ENCODE measurements at regions of chr17 and their contacts with region 1.

Region 1: DNA sequence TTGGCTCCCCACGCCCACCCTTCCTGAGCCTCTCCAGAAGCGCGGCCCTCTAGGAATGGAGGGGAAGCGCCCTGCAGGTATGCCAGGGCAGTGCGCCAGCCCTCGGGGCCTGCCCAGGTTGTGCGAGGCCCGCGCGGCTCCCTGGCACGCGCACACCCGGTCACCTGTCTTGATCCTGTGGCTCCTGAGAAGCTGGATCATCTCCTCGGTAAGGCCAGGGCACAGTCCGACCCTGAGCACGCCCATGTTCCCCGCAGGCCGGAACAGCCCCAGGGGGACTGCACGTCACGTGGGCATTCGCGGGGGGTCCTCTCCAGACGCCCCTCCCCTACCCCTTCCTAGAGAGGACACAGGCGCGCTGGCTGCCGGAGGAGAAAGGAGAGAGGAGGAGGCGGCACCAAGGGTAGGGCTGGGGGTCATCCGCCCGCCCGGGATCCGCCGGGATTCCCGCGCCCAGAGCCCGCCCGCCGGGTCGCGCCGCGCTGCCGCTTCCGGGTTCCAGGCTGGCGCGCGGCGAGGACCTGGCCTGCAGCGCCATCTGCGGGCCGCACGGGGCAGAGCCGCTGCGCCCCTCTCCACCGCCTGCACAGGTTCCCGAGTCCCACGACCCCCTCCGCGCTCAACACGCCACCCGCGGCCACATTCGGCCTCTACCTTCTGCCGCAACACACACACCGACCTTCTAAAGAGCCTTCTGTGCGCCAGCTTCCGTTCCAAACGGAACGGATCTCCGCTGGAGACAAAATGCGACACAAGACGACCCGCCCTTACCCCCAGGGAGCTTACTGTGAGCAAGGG is at the start of gene RAD51D:
- DNase-seq: peak; percentile 72 to 86 (median 81)
- H3K4me3 ChIP-seq: peak within 1 kb of the TSS; percentile 67 to 98
- H3K4me3 Mint-ChIP-seq: peak within 1 kb of the TSS; percentile 90 to 98 (median 94)
- H3K27ac ChIP-seq: peak within 1 kb of the TSS; percentile 80
- H3K27ac Mint-ChIP-seq: peak within 1 kb of the TSS; percentile 85 to 98 (median 94)
- H3K4me1 ChIP-seq: peaks cover 24% of the 10 kb centered on the region
- H3K4me1 Mint-ChIP-seq: peaks cover 24 to 45% (median 32%) of the 10 kb centered on the region in 4 donors
- H3K27me3 ChIP-seq: no peaks in the 10 kb centered on the region
- H3K27me3 Mint-ChIP-seq: peaks cover 0 to 1% of the 10 kb centered on the region in 2 donors
- total RNA-seq, gene RAD51D: 21.5 to 29.2 TPM

Region 2: GRCh38 chr17:34420254-34420766 is 699.3 kb before region 1 on chr17:
- CTCF ChIA-PET with region 1: interaction called, 53 read pairs
- POLR2A ChIA-PET with region 1: interaction called, 4 read pairs
- intact Hi-C with region 1: loop called (anchors 1 kb)
- DNase-seq: peak in 4 of 5 donors; percentile 47 to 59 (median 52)
- H3K4me3 ChIP-seq: no peak overlapping the region
- H3K4me3 Mint-ChIP-seq: no peak overlapping the region
- H3K27ac ChIP-seq: no peak overlapping the region
- H3K27ac Mint-ChIP-seq: no peak overlapping the region
- H3K4me1 ChIP-seq: no peaks in the 10 kb centered on the region
- H3K4me1 Mint-ChIP-seq: peaks cover 0 to 9% (median 3%) of the 10 kb centered on the region in 4 donors
- H3K27me3 ChIP-seq: no peaks in the 10 kb centered on the region
- H3K27me3 Mint-ChIP-seq: peaks cover 19 to 45% of the 10 kb centered on the region in 2 donors

Region 3: GRCh38 chr17:34637548-34638525 is 481.7 kb before region 1 on chr17:
- CTCF ChIA-PET with region 1: no interaction called
- POLR2A ChIA-PET with region 1: interaction called, 5 read pairs
- intact Hi-C with region 1: loop called (anchors 1 kb)
- DNase-seq: peak; percentile 74 to 78 (median 77)
- H3K4me3 ChIP-seq: peak overlapping the region in 1 of 2 donors; percentile 59
- H3K4me3 Mint-ChIP-seq: peak overlapping the region; percentile 79 to 87 (median 84)
- H3K27ac ChIP-seq: no peak overlapping the region
- H3K27ac Mint-ChIP-seq: peak overlapping the region in 3 of 7 donors; percentile 23 to 80 (median 46)
- H3K4me1 ChIP-seq: peaks cover 14% of the 10 kb centered on the region
- H3K4me1 Mint-ChIP-seq: peaks cover 4 to 6% (median 4%) of the 10 kb centered on the region in 4 donors
- H3K27me3 ChIP-seq: peaks cover 5% of the 10 kb centered on the region
- H3K27me3 Mint-ChIP-seq: peaks cover 10 to 23% of the 10 kb centered on the region in 2 donors

Region 4: GRCh38 chr17:34902831-34903547 is 216.6 kb before region 1 on chr17:
- CTCF ChIA-PET with region 1: no interaction called
- POLR2A ChIA-PET with region 1: no interaction called
- intact Hi-C with region 1: no loop called
- DNase-seq: no peak
- H3K4me3 ChIP-seq: no peak overlapping the region
- H3K4me3 Mint-ChIP-seq: no peak overlapping the region
- H3K27ac ChIP-seq: no peak overlapping the region
- H3K27ac Mint-ChIP-seq: no peak overlapping the region
- H3K4me1 ChIP-seq: no peaks in the 10 kb centered on the region
- H3K4me1 Mint-ChIP-seq: no peaks in the 10 kb centered on the region
- H3K27me3 ChIP-seq: no peaks in the 10 kb centered on the region
- H3K27me3 Mint-ChIP-seq: peaks cover 22 to 27% of the 10 kb centered on the region in 2 donors

Region 5: DNA sequence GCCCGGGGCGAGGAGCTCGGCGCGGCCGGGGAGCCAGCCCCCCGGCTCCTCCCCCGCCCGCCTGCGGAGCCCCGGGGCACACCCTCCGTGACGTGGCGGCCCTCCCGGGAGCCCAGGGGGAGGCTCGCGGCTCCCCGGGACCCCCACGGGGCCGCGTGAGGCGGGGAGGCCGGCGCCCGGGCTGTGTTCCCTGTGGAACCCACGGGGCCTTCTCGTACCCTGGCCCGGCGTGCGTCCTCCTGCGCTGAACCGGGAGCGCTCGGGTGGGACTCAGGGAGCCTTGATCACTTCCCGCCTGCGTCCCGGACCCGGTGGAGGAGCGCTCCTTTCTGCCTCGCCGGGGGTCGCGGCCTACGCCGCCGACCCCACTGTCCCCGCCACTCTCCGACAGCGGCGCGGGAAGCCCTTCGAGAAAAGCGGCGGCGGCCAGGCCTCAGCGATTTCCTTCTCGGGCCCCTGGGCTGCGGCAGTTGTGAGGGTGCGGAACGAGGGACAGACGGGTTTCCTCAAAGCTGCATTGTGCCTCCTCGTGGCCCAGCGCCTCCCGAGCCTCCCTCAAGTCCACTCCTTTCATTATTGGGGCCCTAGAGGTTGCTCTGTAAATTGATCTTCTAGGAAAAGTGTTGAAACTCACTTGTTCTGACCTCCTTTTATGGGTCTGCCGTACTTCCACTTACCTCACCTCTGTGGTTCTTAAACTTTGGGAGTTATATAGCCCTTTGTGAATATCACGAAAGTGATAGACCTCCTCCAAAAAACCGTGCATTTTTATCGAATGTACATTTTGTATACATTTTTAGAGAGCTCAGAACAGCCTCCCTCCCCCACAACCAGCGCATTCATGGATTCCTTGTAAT is 138.7 kb before region 1 on chr17:
- CTCF ChIA-PET with region 1: interaction called, 14 read pairs
- POLR2A ChIA-PET with region 1: interaction called, 13 read pairs
- intact Hi-C with region 1: no loop called
- DNase-seq: peak in 4 of 5 donors; percentile 72 to 83 (median 78)
- H3K4me3 ChIP-seq: peak overlapping the region; percentile 53 to 68
- H3K4me3 Mint-ChIP-seq: peak overlapping the region; percentile 88 to 95 (median 91)
- H3K27ac ChIP-seq: peak overlapping the region; percentile 97
- H3K27ac Mint-ChIP-seq: peak overlapping the region; percentile 90 to 98 (median 94)
- H3K4me1 ChIP-seq: peaks cover 41% of the 10 kb centered on the region
- H3K4me1 Mint-ChIP-seq: peaks cover 39 to 58% (median 49%) of the 10 kb centered on the region in 4 donors
- H3K27me3 ChIP-seq: no peaks in the 10 kb centered on the region
- H3K27me3 Mint-ChIP-seq: no peaks in the 10 kb centered on the region

Region 6: DNA sequence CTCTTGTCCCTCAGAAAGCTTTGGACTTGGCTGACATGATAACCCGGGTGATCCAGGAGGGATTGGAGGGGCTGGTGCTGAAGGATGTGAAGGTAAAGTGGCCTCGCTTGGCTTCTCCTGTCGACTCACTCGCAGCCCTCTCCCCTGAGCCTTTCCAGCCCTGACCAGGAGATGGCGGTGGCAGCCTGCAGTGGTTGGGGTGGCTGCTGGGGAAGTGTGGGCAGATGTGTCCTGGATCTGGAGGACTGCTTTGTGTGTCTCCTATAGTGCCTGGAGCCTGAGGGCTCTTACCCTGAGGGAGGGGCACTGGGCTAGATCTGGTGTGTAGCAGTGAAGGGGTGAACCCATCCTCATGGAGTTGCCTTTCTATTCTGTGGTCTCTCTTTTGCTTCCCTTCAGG is 121.4 kb before region 1 on chr17:
- CTCF ChIA-PET with region 1: interaction called, 96 read pairs
- POLR2A ChIA-PET with region 1: interaction called, 19 read pairs
- intact Hi-C with region 1: loop called (anchors 1 kb)
- DNase-seq: peak; percentile 75 to 79 (median 77)
- H3K4me3 ChIP-seq: no peak overlapping the region
- H3K4me3 Mint-ChIP-seq: no peak overlapping the region
- H3K27ac ChIP-seq: no peak overlapping the region
- H3K27ac Mint-ChIP-seq: peak overlapping the region in 6 of 7 donors; percentile 20 to 88 (median 80)
- H3K4me1 ChIP-seq: peaks cover 7% of the 10 kb centered on the region
- H3K4me1 Mint-ChIP-seq: peaks cover 4 to 12% (median 5%) of the 10 kb centered on the region in 4 donors
- H3K27me3 ChIP-seq: no peaks in the 10 kb centered on the region
- H3K27me3 Mint-ChIP-seq: no peaks in the 10 kb centered on the region

Region 7: GRCh38 chr17:35063514-35064223 is 55.9 kb before region 1 on chr17 and contains the start of gene RFFL:
- CTCF ChIA-PET with region 1: interaction called, 40 read pairs
- POLR2A ChIA-PET with region 1: interaction called, 8 read pairs
- intact Hi-C with region 1: loop called (anchors 1 kb)
- DNase-seq: peak; percentile 82 to 97 (median 85)
- H3K4me3 ChIP-seq: peak within 1 kb of the TSS in 1 of 2 donors; percentile 0
- H3K4me3 Mint-ChIP-seq: peak within 1 kb of the TSS; percentile 71 to 88 (median 82)
- H3K27ac ChIP-seq: peak within 1 kb of the TSS; percentile 62
- H3K27ac Mint-ChIP-seq: peak within 1 kb of the TSS; percentile 92 to 96 (median 94)
- H3K4me1 ChIP-seq: peaks cover 55% of the 10 kb centered on the region
- H3K4me1 Mint-ChIP-seq: peaks cover 43 to 77% (median 57%) of the 10 kb centered on the region in 4 donors
- H3K27me3 ChIP-seq: no peaks in the 10 kb centered on the region
- H3K27me3 Mint-ChIP-seq: no peaks in the 10 kb centered on the region
- total RNA-seq, gene RFFL: 72.1 to 82.3 TPM

Region 8: DNA sequence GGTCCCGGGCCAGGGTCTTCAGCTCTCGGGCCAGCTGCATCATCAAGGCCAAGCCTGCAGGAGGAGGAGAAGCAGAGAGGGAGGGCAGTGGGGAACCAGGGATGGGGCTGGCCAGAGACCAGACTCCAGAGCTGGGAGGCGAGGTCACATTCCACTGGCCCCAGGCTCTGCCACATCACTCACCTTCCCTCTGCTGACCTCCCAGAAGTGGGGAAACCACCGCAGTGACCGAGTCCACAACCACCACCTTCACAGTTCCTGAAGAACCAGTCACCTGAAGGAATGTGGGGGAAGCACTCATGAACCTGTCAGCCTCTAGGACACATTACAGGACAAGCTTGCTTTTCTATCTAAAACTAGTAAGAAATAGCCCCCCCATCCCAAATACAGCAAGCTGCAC is 16.3 kb before region 1 on chr17:
- CTCF ChIA-PET with region 1: interaction called, 12 read pairs
- POLR2A ChIA-PET with region 1: no interaction called
- intact Hi-C with region 1: no loop called
- DNase-seq: no peak
- H3K4me3 ChIP-seq: no peak overlapping the region
- H3K4me3 Mint-ChIP-seq: no peak overlapping the region
- H3K27ac ChIP-seq: no peak overlapping the region
- H3K27ac Mint-ChIP-seq: no peak overlapping the region
- H3K4me1 ChIP-seq: no peaks in the 10 kb centered on the region
- H3K4me1 Mint-ChIP-seq: peaks cover 0 to 5% (median 4%) of the 10 kb centered on the region in 4 donors
- H3K27me3 ChIP-seq: no peaks in the 10 kb centered on the region
- H3K27me3 Mint-ChIP-seq: no peaks in the 10 kb centered on the region